Right ventricle myocardium superior (tissue), 1 donor: ENCODE measurements at regions of chr5 and their contacts with region 1.

Region 1: DNA sequence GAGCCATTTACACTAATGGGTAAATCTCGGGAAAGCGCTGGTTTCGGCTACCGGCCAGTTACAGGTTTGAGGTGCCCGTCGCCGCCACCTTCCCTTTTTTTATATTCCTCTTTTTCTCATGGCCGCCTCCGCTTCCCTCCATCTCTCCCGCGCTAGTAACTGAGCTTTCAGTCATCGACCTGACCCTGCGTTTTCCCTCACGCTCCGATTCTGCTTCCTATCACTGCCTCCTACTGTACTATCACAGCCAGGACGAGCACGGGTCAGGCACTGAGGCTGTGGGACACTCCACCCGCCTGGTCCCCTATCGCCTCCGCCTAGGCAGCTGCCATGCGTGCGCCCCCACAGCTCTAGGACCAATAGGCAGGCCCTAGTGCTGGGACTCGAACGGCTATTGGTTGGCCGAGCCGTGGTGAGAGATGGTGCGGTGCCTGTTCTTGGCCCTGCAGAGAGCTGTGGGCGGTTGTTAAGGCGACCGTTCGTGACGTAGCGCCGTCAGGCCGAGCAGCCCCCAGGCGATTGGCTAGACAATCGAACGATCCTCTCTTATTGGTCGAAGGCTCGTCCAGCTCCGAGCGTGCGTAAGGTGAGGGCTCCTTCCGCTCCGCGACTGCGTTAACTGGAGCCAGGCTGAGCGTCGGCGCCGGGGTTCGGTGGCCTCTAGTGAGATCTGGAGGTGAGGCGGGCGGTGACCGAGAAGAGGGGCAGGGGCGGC is at the start of gene HMGCR:
- DNase-seq: peak; percentile 99
- ATAC-seq: peak; percentile 98
- total RNA-seq, gene HMGCR: 7.6 TPM

Region 2: GRCh38 chr5:75236322-75237316 is 100.2 kb before region 1 on chr5 and contains the start of gene ANKRD31:
- intact Hi-C with region 1: loop called (anchors 2 kb)
- DNase-seq: peak; percentile 93
- ATAC-seq: peak; percentile 100
- total RNA-seq, gene ANKRD31: 0.08 TPM

Region 3: GRCh38 chr5:75668977-75669689 is 332.4 kb after region 1 on chr5:
- intact Hi-C with region 1: loop called (anchors 10 kb)
- DNase-seq: no peak
- ATAC-seq: peak; percentile 77

Region 4: DNA sequence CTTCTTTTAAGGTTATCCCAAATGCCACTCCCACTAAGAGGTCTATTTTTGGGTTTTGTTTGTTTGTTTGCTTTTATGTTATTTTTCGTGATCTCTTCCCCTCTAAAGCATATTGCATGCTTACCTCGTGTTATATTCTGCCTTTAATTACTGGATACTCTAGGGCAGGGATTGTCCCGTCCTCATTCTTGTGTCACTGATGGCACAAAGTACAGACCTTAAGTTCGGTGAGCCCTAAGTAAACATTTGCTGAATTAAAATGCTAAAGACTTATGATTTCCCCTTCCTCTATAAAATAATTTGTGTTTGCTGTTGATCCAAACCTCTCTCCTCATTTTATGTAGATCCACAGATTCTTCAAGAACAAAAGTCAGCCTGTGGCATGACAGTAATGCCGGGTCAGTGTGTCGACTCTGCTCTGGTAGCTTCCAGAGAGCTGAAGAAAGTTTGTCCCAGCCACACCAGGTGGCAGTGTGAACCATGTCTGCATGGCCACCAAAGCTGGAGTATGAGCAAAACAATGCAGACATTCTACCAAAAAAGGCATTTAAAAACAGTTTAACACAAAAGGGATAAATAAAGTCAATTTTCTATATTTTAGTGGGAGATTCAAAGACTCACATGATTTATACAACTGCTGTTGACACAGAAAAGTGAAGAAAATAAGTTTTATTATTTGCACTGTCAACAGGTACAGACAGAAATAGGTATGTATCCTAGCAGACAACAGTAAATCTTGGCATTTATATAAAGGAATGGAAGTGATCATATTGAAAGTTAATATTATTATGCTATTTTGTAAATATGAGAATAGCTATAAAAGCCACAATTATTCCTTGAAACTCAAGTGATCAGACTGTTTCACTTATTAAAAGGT is 398.4 kb after region 1 on chr5:
- intact Hi-C with region 1: no loop called
- DNase-seq: no peak
- ATAC-seq: peak; percentile 79